Common myeloid progenitor, CD34-positive (primary cell): ENCODE measurements at regions of chr3 and their contacts with region 1.

Region 1: DNA sequence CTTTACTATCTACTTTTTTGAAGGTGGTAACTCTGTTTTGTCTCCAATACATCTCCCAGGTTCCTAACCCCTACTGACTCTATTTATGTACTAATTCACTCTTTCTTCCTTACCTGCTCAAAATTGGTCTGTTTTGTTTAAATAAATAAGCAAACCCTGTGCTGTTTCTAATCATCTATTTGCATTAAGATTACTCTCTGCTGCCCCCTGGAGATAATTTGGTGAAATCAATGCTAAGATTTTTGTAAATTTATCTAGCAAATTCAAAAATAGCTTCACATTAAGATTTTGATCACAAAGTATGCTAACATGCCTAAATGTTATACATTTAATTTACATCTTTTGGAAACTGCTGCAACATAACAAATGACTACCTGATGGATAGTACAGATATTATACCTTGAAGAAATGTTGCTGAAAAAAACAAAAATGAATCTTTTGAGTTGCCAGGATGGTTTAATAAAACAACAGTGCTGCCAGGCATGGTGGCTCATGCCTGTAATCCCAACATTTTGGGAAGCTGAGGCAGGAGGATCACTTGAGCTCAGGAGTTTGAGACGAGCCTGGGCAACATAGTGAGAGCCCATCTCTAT is 4.4 kb upstream of the CD200R1 start:
- DNase-seq: peak; percentile 45 to 76 (median 67)
- H3K4me3 ChIP-seq: no peak overlapping the region
- H3K27ac ChIP-seq: no peak overlapping the region
- H3K4me1 ChIP-seq: peaks cover 12 to 34% (median 20%) of the 10 kb centered on the region in 4 experiments
- H3K27me3 ChIP-seq: no peaks in the 10 kb centered on the region

Region 2: DNA sequence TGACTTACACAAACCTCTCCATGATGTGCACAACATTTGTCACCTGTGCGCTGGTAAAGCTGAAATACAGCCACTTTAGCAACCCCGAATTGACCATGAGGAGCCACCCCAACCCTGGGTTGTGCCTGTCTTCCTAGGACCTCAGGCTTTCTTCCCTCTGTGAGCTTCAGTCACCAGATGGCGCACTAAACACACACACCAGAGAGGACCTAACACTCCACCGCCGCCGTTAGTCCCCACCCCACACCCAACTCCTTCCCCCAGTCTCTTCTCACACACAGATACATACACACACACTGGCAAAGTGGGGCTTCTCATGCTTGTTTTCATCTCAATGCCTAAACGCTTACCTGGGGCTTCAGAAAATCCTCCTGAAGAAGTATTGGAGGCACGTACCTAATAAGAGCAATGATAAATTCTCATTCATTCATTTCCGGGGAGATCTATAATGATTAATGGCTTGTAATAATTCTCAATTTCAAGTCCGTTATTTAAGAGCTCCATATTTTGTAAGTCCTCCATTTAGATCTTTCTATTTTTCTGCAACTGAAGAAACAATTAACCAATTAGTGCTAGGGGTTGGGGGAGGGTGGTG is 336.3 kb before region 1 on chr3:
- CTCF ChIA-PET with region 1: interaction called, 28 read pairs
- POLR2A ChIA-PET with region 1: no interaction called
- DNase-seq: peak; percentile 81 to 92 (median 90)
- H3K4me3 ChIP-seq: peak overlapping the region in 2 of 7 experiments; percentile 13 to 61
- H3K27ac ChIP-seq: no peak overlapping the region
- H3K4me1 ChIP-seq: peaks cover 0 to 5% (median 3%) of the 10 kb centered on the region in 4 experiments
- H3K27me3 ChIP-seq: peaks cover 0 to 16% (median 6%) of the 10 kb centered on the region in 5 experiments

Region 3: GRCh38 chr3:112990672-112991602 is 11.6 kb after region 1 on chr3 and contains the start of gene GTPBP8:
- CTCF ChIA-PET with region 1: interaction called, 15 read pairs
- POLR2A ChIA-PET with region 1: no interaction called
- DNase-seq: peak; percentile 87 to 90 (median 87)
- H3K4me3 ChIP-seq: peak within 1 kb of the TSS; percentile 60 to 99 (median 97)
- H3K27ac ChIP-seq: peak within 1 kb of the TSS; percentile 82 to 89
- H3K4me1 ChIP-seq: peaks cover 5 to 17% (median 12%) of the 10 kb centered on the region in 4 experiments
- H3K27me3 ChIP-seq: no peaks in the 10 kb centered on the region

Region 4: GRCh38 chr3:113773381-113773780 is 794.0 kb after region 1 on chr3:
- CTCF ChIA-PET with region 1: no interaction called
- POLR2A ChIA-PET with region 1: no interaction called
- DNase-seq: peak in 2 of 3 donors; percentile 60 to 64
- H3K4me3 ChIP-seq: no peak overlapping the region
- H3K27ac ChIP-seq: no peak overlapping the region
- H3K4me1 ChIP-seq: peaks cover 0 to 14% (median 2%) of the 10 kb centered on the region in 4 experiments
- H3K27me3 ChIP-seq: no peaks in the 10 kb centered on the region